ENCODE measurements at regions of chr11 and their contacts with region 1.

Region 1: DNA sequence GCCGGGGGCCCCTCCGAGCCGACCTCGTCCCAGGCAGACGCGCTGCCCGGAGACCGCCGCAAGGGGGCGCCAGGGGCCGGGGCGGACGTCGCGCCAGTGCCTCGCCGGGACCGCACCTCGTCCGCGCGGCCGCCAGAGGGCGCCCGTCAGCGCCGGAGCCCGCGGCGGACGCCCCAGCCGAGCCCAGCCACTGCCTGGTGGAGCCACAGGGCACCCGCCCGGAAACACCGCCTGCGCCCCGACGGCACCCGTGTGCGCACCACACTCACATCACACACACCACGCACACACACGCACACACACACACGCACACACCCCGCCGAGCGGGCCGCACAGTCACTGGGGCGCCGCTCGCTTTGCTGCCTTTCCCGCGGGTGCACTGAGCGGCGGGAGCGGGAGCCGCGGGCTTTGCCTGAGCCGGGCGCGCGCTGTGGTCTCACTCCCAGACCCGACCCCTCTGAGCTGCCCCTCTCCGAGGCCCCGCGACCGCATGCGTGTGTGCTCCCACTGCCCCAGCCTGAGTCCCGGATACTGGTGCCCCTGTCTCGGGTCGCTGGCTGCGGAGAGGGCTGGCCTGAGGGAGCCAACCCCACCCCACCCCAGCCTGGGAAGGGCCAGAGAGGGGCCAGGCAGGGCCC is 449.3 kb downstream of the OPCML start:
- DNase-seq: peak; percentile 82 to 94 (median 91)
- H3K4me3 ChIP-seq: peak overlapping the region; percentile 36 to 73 (median 53)
- H3K27ac ChIP-seq: no peak overlapping the region
- H3K4me1 ChIP-seq: peaks cover 0 to 9% (median 4%) of the 10 kb centered on the region in 4 experiments
- H3K27me3 ChIP-seq: peaks cover 11 to 60% (median 15%) of the 10 kb centered on the region in 5 experiments

Region 2: GRCh38 chr11:133104009-133104744 is 21.2 kb after region 1 on chr11:
- CTCF ChIA-PET with region 1: no interaction called
- POLR2A ChIA-PET with region 1: no interaction called
- DNase-seq: no peak
- H3K4me3 ChIP-seq: no peak overlapping the region
- H3K27ac ChIP-seq: no peak overlapping the region
- H3K4me1 ChIP-seq: no peaks in the 10 kb centered on the region
- H3K27me3 ChIP-seq: no peaks in the 10 kb centered on the region

Region 3: GRCh38 chr11:133163463-133164419 is 80.8 kb after region 1 on chr11:
- CTCF ChIA-PET with region 1: interaction called, 24 read pairs
- POLR2A ChIA-PET with region 1: no interaction called
- DNase-seq: peak; percentile 63 to 79 (median 73)
- H3K4me3 ChIP-seq: no peak overlapping the region
- H3K27ac ChIP-seq: no peak overlapping the region
- H3K4me1 ChIP-seq: peaks cover 0 to 4% (median 1%) of the 10 kb centered on the region in 4 experiments
- H3K27me3 ChIP-seq: peaks cover 0 to 5% (median 2%) of the 10 kb centered on the region in 5 experiments

Region 4: GRCh38 chr11:133834682-133835592 is 752.0 kb after region 1 on chr11:
- CTCF ChIA-PET with region 1: interaction called, 69 read pairs
- POLR2A ChIA-PET with region 1: no interaction called
- DNase-seq: peak; percentile 69 to 85 (median 72)
- H3K4me3 ChIP-seq: no peak overlapping the region
- H3K27ac ChIP-seq: no peak overlapping the region
- H3K4me1 ChIP-seq: peaks cover 0 to 5% (median 1%) of the 10 kb centered on the region in 4 experiments
- H3K27me3 ChIP-seq: peaks cover 0 to 23% (median 4%) of the 10 kb centered on the region in 5 experiments

Measured in common myeloid progenitor, CD34-positive (primary cell).